ENCODE measurements at regions of chr3 and their contacts with region 1.

Region 1: DNA sequence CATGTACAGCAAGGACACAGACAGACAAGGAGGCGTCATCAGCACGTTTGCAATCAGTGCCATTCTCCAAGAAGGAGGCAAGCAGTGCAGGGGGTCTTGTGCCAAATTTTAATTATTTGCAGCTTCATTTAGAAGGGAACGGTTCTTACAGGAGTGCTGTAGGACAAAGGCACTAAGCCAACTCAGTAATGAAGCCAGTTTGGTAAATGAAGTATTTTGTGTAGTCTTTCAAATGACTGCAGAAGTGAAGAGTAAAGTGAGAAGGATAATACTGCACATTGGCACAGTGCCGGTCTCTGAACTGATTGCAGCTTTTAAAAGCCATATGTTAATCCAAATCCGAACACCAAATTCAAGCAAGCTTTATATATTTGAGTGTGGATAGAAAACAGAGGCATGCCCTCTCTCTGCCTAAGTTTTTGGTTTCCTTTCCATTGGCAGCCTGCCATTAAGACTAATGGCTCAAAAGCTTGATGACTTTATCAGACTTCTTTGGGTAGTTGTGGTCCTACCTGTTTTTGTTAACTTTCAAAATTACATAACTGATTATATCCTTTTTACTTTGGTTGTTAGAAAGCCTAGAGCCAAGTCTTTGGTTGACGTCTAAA is 101.3 kb downstream of the SENP2 start:
- DNase-seq: no peak
- ATAC-seq: no peak
- H3K4me3 ChIP-seq: no peak overlapping the region
- H3K27ac ChIP-seq: no peak overlapping the region
- H3K4me1 ChIP-seq: no peaks in the 10 kb centered on the region
- H3K27me3 ChIP-seq: no peaks in the 10 kb centered on the region
- CTCF ChIP-seq: no peak

Region 2: DNA sequence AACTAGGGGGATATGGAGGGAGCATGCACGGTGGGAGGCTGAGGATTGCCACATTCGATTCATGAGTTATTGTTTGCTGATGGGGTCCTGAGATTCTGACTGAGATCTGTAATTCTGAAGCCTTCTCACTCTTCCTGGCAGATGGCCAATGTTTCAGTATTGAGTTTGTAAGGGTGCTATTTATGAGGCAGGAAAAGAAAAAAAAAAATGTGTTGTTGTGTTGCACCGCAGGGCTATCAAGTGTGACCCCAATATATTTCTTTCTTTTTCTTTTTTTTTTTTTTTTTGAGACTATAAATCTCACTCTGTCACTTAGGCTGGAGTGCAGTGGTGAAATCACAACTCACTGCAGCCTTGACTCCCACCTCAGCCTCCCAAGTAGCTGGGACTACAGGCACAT is 104.5 kb before region 1 on chr3:
- intact Hi-C with region 1: no loop called
- DNase-seq: no peak
- ATAC-seq: no peak
- H3K4me3 ChIP-seq: no peak overlapping the region
- H3K27ac ChIP-seq: no peak overlapping the region
- H3K4me1 ChIP-seq: peaks cover 0 to 9% (median 0%) of the 10 kb centered on the region in 3 donors
- H3K27me3 ChIP-seq: no peaks in the 10 kb centered on the region
- CTCF ChIP-seq: no peak

Region 3: DNA sequence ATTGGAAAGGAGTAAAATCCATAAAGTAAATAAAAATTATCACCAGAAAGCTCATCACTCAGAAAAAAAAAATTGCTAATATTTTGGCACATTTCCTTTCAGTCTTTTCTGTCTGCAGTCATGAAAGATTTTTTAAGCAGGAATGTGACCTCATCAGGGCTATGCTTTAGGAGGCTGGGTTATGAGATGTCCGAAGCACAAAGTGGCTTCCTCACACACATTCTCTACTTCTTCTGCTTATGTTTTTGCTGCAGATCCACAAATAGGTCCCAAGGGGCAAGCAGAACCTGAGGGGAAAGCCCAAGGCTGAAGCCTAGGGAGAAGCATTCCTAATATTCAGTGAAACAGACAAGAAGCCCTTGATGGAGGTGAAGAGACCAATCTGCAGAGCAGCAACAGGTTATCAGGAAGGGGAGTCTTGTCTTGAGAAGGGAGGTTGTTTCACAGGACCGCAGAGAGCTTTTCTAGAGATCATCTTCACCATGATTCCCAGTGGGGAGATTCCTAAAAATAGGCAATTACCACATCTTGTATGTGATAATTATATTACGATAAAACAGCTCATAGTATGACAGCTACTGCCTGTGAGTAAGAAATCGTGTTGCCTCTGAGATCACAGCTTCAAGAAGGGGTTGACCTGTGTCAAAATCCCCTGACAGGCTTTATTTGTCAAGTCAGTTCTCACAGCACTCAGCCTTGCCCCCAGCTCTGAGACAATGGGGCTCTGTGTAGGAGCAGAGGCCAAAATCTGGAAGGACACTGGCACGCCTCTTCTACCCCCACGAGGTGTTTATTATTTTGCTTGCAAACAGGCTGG is 77.0 kb after region 1 on chr3:
- intact Hi-C with region 1: loop called in 1 of 3 experiments (anchors 10 kb)
- DNase-seq: no peak
- ATAC-seq: peak in 3 of 4 donors; percentile 42 to 45 (median 43)
- H3K4me3 ChIP-seq: no peak overlapping the region
- H3K27ac ChIP-seq: peak overlapping the region in 1 of 4 donors; percentile 8
- H3K4me1 ChIP-seq: no peaks in the 10 kb centered on the region
- H3K27me3 ChIP-seq: no peaks in the 10 kb centered on the region
- CTCF ChIP-seq: no peak

Measured in pancreas (tissue), 10 donors.